PC-9 (cell line): ENCODE measurements at regions of chr7 and their contacts with region 1.

Region 1: DNA sequence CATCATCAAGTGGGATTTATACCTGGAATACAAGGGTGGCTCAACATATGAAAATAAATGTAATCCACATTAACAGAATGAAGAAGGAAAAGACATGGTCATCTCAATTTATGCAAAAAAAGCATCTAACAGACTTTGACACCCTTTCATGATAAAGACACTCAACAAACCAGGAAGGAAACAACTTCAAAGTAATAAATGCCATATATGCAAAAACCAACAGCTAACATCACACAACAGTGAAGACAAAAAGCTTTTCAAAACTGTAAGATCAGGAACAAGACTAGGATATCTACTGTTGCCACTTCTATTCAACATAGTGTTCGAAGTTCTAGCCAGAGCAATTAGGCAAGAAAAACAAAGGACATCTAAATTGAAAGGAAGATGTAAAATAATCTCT is 22.9 kb downstream of the TNPO3 start:
- DNase-seq: no peak
- H3K4me3 ChIP-seq: no peak overlapping the region
- H3K27ac ChIP-seq: no peak overlapping the region
- H3K4me1 ChIP-seq: no peaks in the 10 kb centered on the region
- H3K27me3 ChIP-seq: no peaks in the 10 kb centered on the region
- CTCF ChIP-seq: no peak

Region 2: GRCh38 chr7:128986609-128987008 is 45.4 kb before region 1 on chr7:
- CTCF ChIA-PET with region 1: no interaction called
- POLR2A ChIA-PET with region 1: interaction called, 10 read pairs
- intact Hi-C with region 1: no loop called
- DNase-seq: no peak
- H3K4me3 ChIP-seq: no peak overlapping the region
- H3K27ac ChIP-seq: no peak overlapping the region
- H3K4me1 ChIP-seq: no peaks in the 10 kb centered on the region
- H3K27me3 ChIP-seq: no peaks in the 10 kb centered on the region
- CTCF ChIP-seq: no peak